H1 (cell line): ENCODE measurements at regions of chr3 and their contacts with region 1.

Region 1: GRCh38 chr3:66378256-66378823 is 122.5 kb downstream of the LRIG1 start:
- DNase-seq: peak in 1 of 2 experiments; percentile 15
- H3K4me3 ChIP-seq: no peak overlapping the region
- H3K27ac ChIP-seq: no peak overlapping the region
- H3K4me1 ChIP-seq: no peaks in the 10 kb centered on the region
- H3K27me3 ChIP-seq: no peaks in the 10 kb centered on the region
- CTCF ChIP-seq: peak; percentile 48 to 66 (median 53)
- EP300 ChIP-seq: no peak
- POLR2A ChIP-seq: peak in 1 of 2 experiments; percentile 32; a peak in 1 of 3 replicates
- RAD21 ChIP-seq: peak; percentile 38

Region 2: GRCh38 chr3:66228707-66229106 is 149.6 kb before region 1 on chr3:
- CTCF ChIA-PET with region 1: no interaction called
- POLR2A ChIA-PET with region 1: no interaction called
- DNase-seq: no peak
- H3K4me3 ChIP-seq: no peak overlapping the region
- H3K27ac ChIP-seq: no peak overlapping the region
- H3K4me1 ChIP-seq: no peaks in the 10 kb centered on the region
- H3K27me3 ChIP-seq: no peaks in the 10 kb centered on the region
- CTCF ChIP-seq: no peak
- EP300 ChIP-seq: no peak
- POLR2A ChIP-seq: no peak
- RAD21 ChIP-seq: no peak

Region 3: GRCh38 chr3:66267031-66267430 is 111.3 kb before region 1 on chr3:
- CTCF ChIA-PET with region 1: interaction called, 16 read pairs
- POLR2A ChIA-PET with region 1: no interaction called
- DNase-seq: no peak
- H3K4me3 ChIP-seq: no peak overlapping the region
- H3K27ac ChIP-seq: no peak overlapping the region
- H3K4me1 ChIP-seq: no peaks in the 10 kb centered on the region
- H3K27me3 ChIP-seq: peaks cover 0 to 1% (median 0%) of the 10 kb centered on the region in 4 experiments; a peak in 1 of 7 replicates
- CTCF ChIP-seq: no peak
- EP300 ChIP-seq: no peak
- POLR2A ChIP-seq: no peak
- RAD21 ChIP-seq: no peak

Region 4: DNA sequence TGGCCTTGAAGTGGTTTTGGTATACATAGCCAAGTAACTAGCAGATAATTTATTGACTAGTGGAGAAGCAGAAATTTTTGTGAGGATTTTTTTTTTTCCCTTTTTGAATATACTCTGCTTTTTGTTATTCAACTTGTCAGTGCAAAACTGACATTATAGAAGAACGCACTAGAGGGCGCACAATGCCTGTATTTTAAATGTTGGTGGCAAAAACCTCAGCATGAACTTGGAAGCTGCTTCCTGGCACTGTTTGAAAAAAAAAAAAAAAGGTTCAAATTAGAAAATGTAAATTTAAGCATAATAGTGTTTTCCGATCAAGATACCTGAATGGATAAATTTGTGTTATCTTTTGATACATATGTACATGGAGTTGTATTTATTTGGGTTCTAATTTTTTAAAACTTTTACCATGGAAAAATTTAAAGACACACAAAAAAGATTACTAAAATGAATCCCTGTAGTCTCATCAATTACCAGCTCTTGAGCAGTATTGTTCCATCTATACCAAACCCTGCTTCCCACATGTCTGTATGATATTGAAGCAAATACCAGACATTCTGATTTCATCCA is 101.5 kb before region 1 on chr3:
- CTCF ChIA-PET with region 1: interaction called, 77 read pairs
- POLR2A ChIA-PET with region 1: interaction called, 3 read pairs
- DNase-seq: peak; percentile 7 to 60
- H3K4me3 ChIP-seq: no peak overlapping the region
- H3K27ac ChIP-seq: no peak overlapping the region
- H3K4me1 ChIP-seq: peaks cover 0 to 3% (median 2%) of the 10 kb centered on the region in 4 experiments; a peak in 2 of 7 replicates
- H3K27me3 ChIP-seq: no peaks in the 10 kb centered on the region
- CTCF ChIP-seq: peak in 2 of 3 experiments; percentile 54 to 72; a peak in 3 of 4 replicates
- EP300 ChIP-seq: no peak
- POLR2A ChIP-seq: no peak
- RAD21 ChIP-seq: peak; percentile 87

Region 5: GRCh38 chr3:66317750-66318376 is 60.5 kb before region 1 on chr3:
- CTCF ChIA-PET with region 1: interaction called, 18 read pairs
- POLR2A ChIA-PET with region 1: no interaction called
- DNase-seq: no peak
- H3K4me3 ChIP-seq: no peak overlapping the region
- H3K27ac ChIP-seq: no peak overlapping the region
- H3K4me1 ChIP-seq: peaks cover 3 to 5% (median 4%) of the 10 kb centered on the region in 4 experiments
- H3K27me3 ChIP-seq: no peaks in the 10 kb centered on the region
- CTCF ChIP-seq: no peak
- EP300 ChIP-seq: no peak
- POLR2A ChIP-seq: no peak
- RAD21 ChIP-seq: no peak

Region 6: DNA sequence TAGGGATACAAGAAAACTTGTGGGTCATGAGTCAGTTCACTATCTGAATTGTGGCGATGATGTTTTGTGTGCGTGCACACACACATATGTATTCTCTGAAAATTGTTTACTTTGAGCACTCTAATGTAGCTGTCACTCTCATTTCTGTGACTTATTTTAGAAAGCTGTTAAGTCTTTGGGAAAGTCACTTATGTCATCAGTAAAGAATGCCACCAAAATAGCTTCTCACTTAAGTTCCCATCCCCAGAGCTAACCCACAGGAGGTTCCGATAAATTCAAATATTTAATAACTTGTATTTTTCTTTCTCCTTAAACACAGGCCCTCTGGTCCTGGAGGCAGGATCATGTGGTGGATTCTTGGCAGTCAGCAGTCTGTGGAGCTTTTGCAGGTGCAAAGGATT is 15.8 kb before region 1 on chr3:
- CTCF ChIA-PET with region 1: interaction called, 17 read pairs
- POLR2A ChIA-PET with region 1: no interaction called
- DNase-seq: no peak
- H3K4me3 ChIP-seq: no peak overlapping the region
- H3K27ac ChIP-seq: no peak overlapping the region
- H3K4me1 ChIP-seq: peaks cover 3 to 11% (median 5%) of the 10 kb centered on the region in 4 experiments; a peak in 5 of 7 replicates
- H3K27me3 ChIP-seq: no peaks in the 10 kb centered on the region
- CTCF ChIP-seq: no peak
- EP300 ChIP-seq: no peak
- POLR2A ChIP-seq: no peak
- RAD21 ChIP-seq: no peak

Region 7: DNA sequence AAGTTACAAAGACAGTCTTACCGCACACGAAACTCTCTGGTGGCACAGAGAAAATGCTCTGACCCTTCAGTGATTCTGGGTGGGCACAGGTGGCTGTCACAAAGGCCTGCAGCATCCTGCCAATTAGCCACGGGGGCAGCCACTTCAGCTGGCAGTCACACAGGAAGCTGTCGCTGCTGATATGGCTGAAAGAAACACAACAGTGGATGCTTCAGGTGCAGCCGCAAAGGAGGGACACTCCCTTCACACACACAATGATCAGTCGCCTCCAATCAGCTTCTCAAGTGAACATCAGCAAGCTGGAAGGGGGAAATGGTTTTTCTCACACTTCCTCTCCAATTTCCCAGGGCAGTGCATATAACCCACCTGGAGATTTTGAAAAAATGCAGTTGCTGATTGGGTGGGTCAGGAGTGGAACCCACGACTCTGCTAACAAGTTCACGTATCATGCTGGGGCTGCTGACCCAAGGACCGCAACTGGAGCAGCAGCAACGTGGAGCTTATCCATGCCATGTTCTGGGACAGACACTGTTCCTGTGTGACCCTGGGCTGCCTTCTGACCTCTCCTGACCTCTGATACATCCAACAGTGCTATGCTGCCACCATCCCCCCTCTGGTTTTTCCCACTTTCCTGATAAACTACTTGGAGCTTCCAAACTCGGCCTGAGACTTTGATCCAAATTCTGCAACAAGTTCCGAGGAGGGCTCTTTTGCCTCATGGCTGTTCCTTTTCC is 15.8 kb after region 1 on chr3:
- CTCF ChIA-PET with region 1: interaction called, 28 read pairs
- POLR2A ChIA-PET with region 1: interaction called, 4 read pairs
- DNase-seq: no peak
- H3K4me3 ChIP-seq: no peak overlapping the region
- H3K27ac ChIP-seq: no peak overlapping the region
- H3K4me1 ChIP-seq: no peaks in the 10 kb centered on the region; a peak in 1 of 7 replicates
- H3K27me3 ChIP-seq: no peaks in the 10 kb centered on the region
- CTCF ChIP-seq: no peak
- EP300 ChIP-seq: no peak
- POLR2A ChIP-seq: no peak; a peak in 1 of 3 replicates
- RAD21 ChIP-seq: no peak

Region 8: DNA sequence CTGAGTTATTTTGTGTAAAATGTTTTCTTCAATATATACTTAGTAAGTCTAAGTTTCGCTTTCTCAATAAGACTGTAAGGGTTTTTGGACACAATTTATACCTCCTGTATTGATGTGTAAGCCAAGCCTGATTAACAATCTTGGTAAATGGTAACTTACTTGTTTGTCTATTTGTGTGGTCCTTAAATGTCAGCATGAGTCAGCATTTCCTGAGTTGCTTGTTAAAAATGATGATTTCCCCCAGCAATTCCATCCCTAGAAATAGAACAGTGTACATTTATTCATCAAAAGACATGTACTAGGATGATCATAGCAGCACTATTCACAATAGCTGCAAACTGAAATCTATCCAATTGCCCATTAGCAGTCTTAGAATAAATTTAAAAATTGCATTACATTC is 175.8 kb after region 1 on chr3:
- CTCF ChIA-PET with region 1: no interaction called
- POLR2A ChIA-PET with region 1: no interaction called
- DNase-seq: no peak
- H3K4me3 ChIP-seq: no peak overlapping the region
- H3K27ac ChIP-seq: no peak overlapping the region
- H3K4me1 ChIP-seq: peaks cover 6 to 14% (median 10%) of the 10 kb centered on the region in 4 experiments
- H3K27me3 ChIP-seq: no peaks in the 10 kb centered on the region
- CTCF ChIP-seq: no peak
- EP300 ChIP-seq: no peak
- POLR2A ChIP-seq: no peak
- RAD21 ChIP-seq: no peak